Upper lobe of right lung (tissue), 1 donor: ENCODE measurements at regions of chr13 and their contacts with region 1.

Region 1: GRCh38 chr13:32878172-32878571 is 138.1 kb upstream of the KL start:
- DNase-seq: no peak
- ATAC-seq: no peak
- H3K4me3 ChIP-seq: no peak overlapping the region
- H3K27ac ChIP-seq: no peak overlapping the region
- H3K4me1 ChIP-seq: no peaks in the 10 kb centered on the region
- H3K27me3 ChIP-seq: no peaks in the 10 kb centered on the region
- CTCF ChIP-seq: no peak

Region 2: GRCh38 chr13:33017323-33017929 is 139.3 kb after region 1 on chr13:
- intact Hi-C with region 1: no loop called
- DNase-seq: no peak
- ATAC-seq: peak; percentile 84
- H3K4me3 ChIP-seq: peak overlapping the region; percentile 59
- H3K27ac ChIP-seq: peak overlapping the region; percentile 85
- H3K4me1 ChIP-seq: peaks cover 4% of the 10 kb centered on the region
- H3K27me3 ChIP-seq: peaks cover 26% of the 10 kb centered on the region
- CTCF ChIP-seq: peak; percentile 61

Region 3: DNA sequence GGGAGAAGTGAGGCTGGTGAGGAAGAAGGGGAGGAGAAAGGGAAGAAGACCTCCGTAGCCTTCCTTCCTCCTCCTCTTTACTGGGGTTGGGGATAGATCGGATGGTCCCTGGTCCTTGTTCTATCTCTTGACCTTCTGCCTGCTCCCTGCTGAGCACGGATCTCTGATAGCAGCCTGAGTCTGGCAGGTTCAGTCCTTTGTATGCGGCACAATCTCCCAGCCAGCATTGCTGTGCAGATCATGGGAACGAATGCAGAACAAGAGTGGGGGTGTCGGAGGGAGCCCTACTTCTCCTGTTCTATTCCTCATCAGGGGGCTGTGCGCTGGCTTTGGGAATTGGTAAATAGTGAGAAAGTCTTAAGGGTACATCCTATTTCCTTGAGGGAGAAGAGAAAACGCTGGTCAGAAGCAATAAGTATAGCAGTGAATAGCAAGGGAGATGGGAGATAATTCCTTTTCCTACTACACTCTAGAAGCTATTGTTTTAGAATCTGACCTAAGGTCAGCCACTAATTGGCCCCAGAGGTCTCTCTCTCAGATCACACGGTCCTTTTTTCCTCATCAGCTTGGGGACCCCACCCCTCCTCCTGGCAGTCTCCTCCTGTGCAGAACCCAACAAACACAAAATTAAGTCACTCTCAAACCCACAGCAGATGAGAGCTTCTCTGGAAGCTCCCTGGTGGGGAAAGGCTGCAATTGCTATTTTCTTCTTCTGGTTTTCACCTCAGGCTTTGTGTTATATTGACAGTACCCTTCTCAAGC is 179.0 kb after region 1 on chr13:
- intact Hi-C with region 1: loop called (anchors 5 kb)
- DNase-seq: no peak
- ATAC-seq: no peak
- H3K4me3 ChIP-seq: no peak overlapping the region
- H3K27ac ChIP-seq: no peak overlapping the region
- H3K4me1 ChIP-seq: peaks cover 1% of the 10 kb centered on the region
- H3K27me3 ChIP-seq: no peaks in the 10 kb centered on the region
- CTCF ChIP-seq: peak; percentile 36